ENCODE measurements at regions of chr5 and their contacts with region 1.

Region 1: GRCh38 chr5:39714036-39714698 is 289.4 kb upstream of the DAB2 start:
- DNase-seq: peak; percentile 96
- ATAC-seq: peak; percentile 45
- H3K4me3 ChIP-seq: peak overlapping the region; percentile 8; the same call in 1 of the 2 replicates
- H3K27ac ChIP-seq: peak overlapping the region; percentile 97
- H3K4me1 ChIP-seq: peaks cover 44% of the 10 kb centered on the region
- H3K27me3 ChIP-seq: no peaks in the 10 kb centered on the region
- CTCF ChIP-seq: peak; percentile 80

Region 2: DNA sequence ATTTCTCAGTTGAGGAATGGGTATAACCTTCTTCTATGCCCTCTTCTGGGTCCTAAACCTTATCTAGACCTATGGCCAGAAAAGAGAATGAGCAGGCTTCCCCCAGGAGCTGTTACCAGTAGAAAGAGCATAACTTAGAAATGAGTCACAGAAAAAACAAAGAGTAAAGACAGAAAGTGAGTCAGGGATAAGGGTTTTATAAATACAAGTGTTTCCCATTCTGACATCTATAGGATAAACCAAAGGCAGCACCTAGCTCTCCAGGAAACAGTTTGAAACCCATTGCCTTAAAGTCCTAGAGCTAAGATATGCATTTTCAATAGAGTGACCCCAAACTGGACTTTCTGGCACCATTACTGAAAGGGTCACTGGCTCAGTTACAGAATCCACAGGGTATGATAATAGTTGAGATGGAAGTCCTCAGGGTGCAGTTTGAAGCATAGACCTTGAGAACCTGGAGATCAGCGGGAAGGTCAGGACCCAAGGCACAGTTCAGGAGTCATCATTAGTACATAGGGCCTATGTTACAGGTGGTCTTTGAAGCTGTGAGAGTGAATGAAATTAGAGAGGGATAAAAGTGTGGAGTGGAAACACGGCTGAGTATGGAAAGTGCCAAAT is 1115.1 kb before region 1 on chr5:
- CTCF ChIA-PET with region 1: no interaction called
- POLR2A ChIA-PET with region 1: no interaction called
- intact Hi-C with region 1: no loop called
- DNase-seq: peak; percentile 92
- ATAC-seq: peak; percentile 89
- H3K4me3 ChIP-seq: no peak overlapping the region
- H3K27ac ChIP-seq: peak overlapping the region; percentile 34
- H3K4me1 ChIP-seq: peaks cover 63% of the 10 kb centered on the region
- H3K27me3 ChIP-seq: no peaks in the 10 kb centered on the region
- CTCF ChIP-seq: no peak

Region 3: DNA sequence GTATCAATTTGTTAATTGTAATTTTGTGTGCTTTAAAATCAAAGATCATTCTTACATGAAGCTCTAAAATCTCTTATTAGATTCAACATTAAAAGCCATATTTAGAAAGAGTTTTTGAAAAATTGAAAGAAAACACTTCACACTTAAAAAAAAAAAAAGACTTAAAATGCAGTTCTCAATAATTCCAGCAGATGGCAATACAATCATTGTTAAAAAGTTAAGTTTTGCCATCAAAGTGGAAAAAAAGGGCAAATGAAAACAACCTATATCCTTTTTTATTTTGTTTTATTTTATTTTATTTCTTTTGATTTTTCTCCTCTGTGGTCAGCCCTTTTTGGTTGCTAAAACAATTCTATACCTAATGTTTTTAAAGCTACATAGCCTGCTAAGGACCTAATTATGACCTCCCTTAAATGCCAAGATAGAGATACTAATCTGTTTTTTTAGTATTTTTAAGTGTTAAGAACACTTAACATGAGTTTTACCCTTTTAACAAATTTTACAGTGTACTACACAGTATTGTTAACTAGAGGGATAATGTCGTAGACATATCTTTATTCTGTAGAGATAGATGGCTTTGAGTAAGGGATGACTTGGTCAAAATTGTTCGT is 135.2 kb before region 1 on chr5:
- CTCF ChIA-PET with region 1: no interaction called
- POLR2A ChIA-PET with region 1: no interaction called
- intact Hi-C with region 1: loop called (anchors 1 kb)
- DNase-seq: peak; percentile 65
- ATAC-seq: no peak
- H3K4me3 ChIP-seq: no peak overlapping the region
- H3K27ac ChIP-seq: no peak overlapping the region
- H3K4me1 ChIP-seq: 0 out of 2 replicates have a peak, but pooled peaks cover 3% of the 10 kb centered on the region
- H3K27me3 ChIP-seq: no peaks in the 10 kb centered on the region
- CTCF ChIP-seq: peak; percentile 74

Region 4: GRCh38 chr5:39648532-39649213 is 65.5 kb before region 1 on chr5:
- CTCF ChIA-PET with region 1: interaction called, 11 read pairs
- POLR2A ChIA-PET with region 1: no interaction called
- intact Hi-C with region 1: loop called (anchors 1 kb)
- DNase-seq: peak; percentile 93
- ATAC-seq: peak; percentile 97
- H3K4me3 ChIP-seq: no peak overlapping the region
- H3K27ac ChIP-seq: peak overlapping the region; percentile 62
- H3K4me1 ChIP-seq: peaks cover 30% of the 10 kb centered on the region
- H3K27me3 ChIP-seq: no peaks in the 10 kb centered on the region
- CTCF ChIP-seq: peak; percentile 83

Region 5: GRCh38 chr5:39822020-39822419 is 107.9 kb after region 1 on chr5:
- CTCF ChIA-PET with region 1: no interaction called
- POLR2A ChIA-PET with region 1: no interaction called
- intact Hi-C with region 1: loop called (anchors 5 kb)
- DNase-seq: peak; percentile 44
- ATAC-seq: peak; percentile 52
- H3K4me3 ChIP-seq: no peak overlapping the region
- H3K27ac ChIP-seq: no peak overlapping the region
- H3K4me1 ChIP-seq: peaks cover 8% of the 10 kb centered on the region; the same call in 1 of the 2 replicates
- H3K27me3 ChIP-seq: no peaks in the 10 kb centered on the region
- CTCF ChIP-seq: no peak

Region 6: DNA sequence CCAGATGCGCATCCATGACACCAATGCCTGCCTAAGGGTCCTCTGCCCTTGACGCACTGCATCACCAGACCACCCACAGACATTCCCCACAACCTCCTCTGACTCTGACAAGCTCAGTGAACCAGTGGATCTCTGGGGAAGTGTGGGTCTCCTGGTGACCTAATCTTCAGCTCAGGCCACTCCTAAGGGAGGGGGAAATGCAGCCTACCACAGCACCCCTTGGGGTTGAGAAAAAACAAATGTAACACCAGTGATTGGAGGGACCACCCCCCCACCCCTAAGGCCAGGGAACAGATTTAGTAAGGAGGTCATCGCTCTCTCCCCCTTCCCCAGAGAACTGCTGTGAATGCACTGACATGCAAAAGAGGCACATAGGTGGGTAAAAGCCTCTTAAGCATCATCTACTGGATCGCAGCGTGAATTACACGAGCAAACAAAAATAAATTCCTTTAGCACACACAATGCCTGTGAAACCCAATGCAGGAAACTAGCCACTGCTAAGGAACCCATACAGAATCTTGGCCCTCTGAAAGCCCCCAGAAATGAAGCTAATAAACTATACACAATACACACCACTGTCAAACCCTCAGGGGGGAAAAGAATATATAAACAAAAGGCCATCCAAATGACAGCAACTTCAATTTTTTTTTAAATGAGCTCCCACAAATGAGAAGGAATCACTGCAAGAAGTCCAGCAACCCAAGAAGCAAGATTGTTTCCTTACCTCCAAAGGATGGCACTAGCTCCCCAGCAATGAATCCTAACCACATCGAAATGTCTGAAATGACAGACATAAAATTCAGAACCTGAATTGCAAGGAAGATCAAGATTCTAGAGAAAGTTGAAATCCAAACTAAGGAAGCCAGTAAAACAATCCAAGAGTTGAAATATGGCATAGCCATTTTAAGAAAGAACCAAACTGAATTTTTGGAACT is 451.9 kb after region 1 on chr5:
- CTCF ChIA-PET with region 1: no interaction called
- POLR2A ChIA-PET with region 1: no interaction called
- intact Hi-C with region 1: loop called (anchors 2 kb)
- DNase-seq: peak; percentile 55
- ATAC-seq: peak; percentile 66
- H3K4me3 ChIP-seq: no peak overlapping the region
- H3K27ac ChIP-seq: peak overlapping the region; percentile 32
- H3K4me1 ChIP-seq: peaks cover 17% of the 10 kb centered on the region
- H3K27me3 ChIP-seq: no peaks in the 10 kb centered on the region
- CTCF ChIP-seq: peak; percentile 46; the same call in 1 of the 2 replicates

Region 7: GRCh38 chr5:40410231-40410861 is 696.2 kb after region 1 on chr5:
- CTCF ChIA-PET with region 1: no interaction called
- POLR2A ChIA-PET with region 1: no interaction called
- intact Hi-C with region 1: loop called (anchors 10 kb)
- DNase-seq: peak; percentile 71
- ATAC-seq: peak; percentile 6; the same call in 1 of the 2 replicates
- H3K4me3 ChIP-seq: peak overlapping the region; percentile 23
- H3K27ac ChIP-seq: peak overlapping the region; percentile 90
- H3K4me1 ChIP-seq: peaks cover 34% of the 10 kb centered on the region
- H3K27me3 ChIP-seq: no peaks in the 10 kb centered on the region
- CTCF ChIP-seq: no peak

Region 8: GRCh38 chr5:40688127-40688761 is 974.1 kb after region 1 on chr5:
- CTCF ChIA-PET with region 1: no interaction called
- POLR2A ChIA-PET with region 1: no interaction called
- intact Hi-C with region 1: loop called (anchors 1 kb)
- DNase-seq: peak; percentile 97
- ATAC-seq: peak; percentile 63
- H3K4me3 ChIP-seq: peak overlapping the region; percentile 11
- H3K27ac ChIP-seq: peak overlapping the region; percentile 41
- H3K4me1 ChIP-seq: peaks cover 56% of the 10 kb centered on the region
- H3K27me3 ChIP-seq: no peaks in the 10 kb centered on the region
- CTCF ChIP-seq: peak; percentile 96

Measured in PC-3 (cell line).